Sigmoid colon (tissue), 7 donors: ENCODE measurements at regions of chr11 and their contacts with region 1.

Region 1: DNA sequence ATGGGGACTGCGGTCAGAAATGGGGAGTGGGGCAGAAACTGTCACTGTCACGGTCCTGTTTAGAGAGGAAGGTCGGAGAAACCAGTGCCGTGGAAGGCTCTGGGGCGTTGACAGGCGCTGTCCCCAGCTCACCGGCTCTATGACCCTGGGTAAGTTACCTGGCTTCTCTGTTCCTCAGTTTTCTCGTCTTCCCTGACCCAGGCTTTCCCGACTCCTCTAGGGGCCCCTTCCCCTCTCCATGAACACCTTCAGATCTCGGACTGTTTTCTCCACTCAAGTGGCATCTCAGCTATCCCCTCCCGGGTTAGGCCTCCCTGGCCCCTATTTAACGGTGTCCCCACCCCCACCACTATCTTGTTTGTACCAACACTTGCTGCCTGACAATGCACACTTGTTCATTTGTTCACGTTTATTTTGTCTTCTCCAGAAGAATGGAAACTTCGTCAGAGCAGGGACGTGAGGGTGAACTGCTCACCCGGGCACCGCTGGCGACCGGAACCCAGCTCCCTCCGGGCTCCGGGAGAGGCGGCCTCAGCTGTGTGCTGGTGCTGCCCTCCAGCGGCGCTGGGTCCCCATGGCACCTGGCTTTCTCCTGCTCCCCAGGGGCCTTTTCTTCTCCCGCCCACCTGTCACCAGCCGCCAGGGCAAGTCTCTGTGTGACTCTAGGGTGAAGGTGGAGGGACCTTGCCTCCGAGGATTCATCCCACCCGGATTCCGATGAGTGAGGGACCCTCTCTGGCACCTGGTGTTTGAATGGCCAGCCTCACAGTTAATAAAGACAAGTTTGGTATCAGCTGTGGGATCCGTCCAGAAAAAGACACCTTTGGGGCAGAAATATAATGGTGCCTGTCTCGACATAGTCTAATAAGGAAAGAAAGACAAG is 33.1 kb upstream of the SLC35C1 start:
- DNase-seq: peak; percentile 90
- H3K4me3 ChIP-seq: peak overlapping the region; percentile 29 to 59 (median 47)
- H3K27ac ChIP-seq: peak overlapping the region; percentile 61 to 73 (median 72)
- H3K4me1 ChIP-seq: peaks cover 0 to 5% (median 2%) of the 10 kb centered on the region in 4 donors
- H3K27me3 ChIP-seq: no peaks in the 10 kb centered on the region
- CTCF ChIP-seq: peak; percentile 71 to 91 (median 84)
- EP300 ChIP-seq: no peak
- POLR2A ChIP-seq: no peak

Region 2: DNA sequence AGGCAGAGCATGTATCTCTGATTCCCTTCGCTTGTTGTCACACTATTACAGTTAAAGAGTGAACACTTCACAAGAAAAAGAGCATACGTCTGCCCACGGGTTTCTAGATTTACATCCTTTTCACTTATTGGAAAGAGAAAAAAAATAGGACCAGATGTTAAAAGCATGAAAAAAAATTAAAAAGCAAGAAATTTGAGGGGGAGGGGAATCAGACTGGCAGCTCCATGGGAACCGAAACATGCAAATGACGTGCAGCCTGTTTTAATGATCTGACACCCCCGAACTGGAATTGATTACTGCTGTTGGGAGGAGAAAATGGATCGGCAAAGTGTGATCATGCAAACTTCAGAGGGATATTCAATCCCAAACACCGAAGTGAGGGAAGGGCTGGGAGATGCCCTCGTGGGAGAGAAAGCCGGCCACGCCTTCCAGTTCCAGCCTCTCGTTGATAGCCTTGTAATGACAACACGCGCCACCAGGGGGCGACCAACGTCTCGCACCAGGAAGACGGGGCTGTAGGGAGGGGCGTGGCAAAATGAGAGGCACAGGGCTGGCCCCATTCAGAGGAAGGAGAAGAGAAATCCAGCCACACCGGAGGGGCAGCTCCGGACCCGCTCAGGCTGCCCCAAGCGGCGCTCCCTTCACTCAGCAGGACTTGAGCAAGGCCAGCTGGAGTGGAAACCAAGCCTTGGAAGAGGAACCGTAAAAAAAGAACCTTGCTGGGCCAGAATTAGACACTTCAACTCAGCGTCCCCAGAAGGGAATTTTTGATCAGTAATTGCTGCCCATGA is 431.9 kb before region 1 on chr11:
- intact Hi-C with region 1: loop called (anchors 2 kb)
- DNase-seq: peak; percentile 95
- H3K4me3 ChIP-seq: peak overlapping the region in 1 of 4 donors; percentile 13
- H3K27ac ChIP-seq: no peak overlapping the region
- H3K4me1 ChIP-seq: peaks cover 0 to 10% (median 4%) of the 10 kb centered on the region in 4 donors
- H3K27me3 ChIP-seq: peaks cover 0 to 4% (median 0%) of the 10 kb centered on the region in 3 donors
- CTCF ChIP-seq: peak; percentile 65 to 87 (median 82)
- EP300 ChIP-seq: no peak
- POLR2A ChIP-seq: no peak

Region 3: GRCh38 chr11:45371251-45372115 is 400.3 kb before region 1 on chr11:
- intact Hi-C with region 1: loop called (anchors 5 kb)
- DNase-seq: no peak
- H3K4me3 ChIP-seq: no peak overlapping the region
- H3K27ac ChIP-seq: no peak overlapping the region
- H3K4me1 ChIP-seq: peaks cover 0 to 5% (median 2%) of the 10 kb centered on the region in 4 donors
- H3K27me3 ChIP-seq: peaks cover 0 to 24% (median 8%) of the 10 kb centered on the region in 3 donors
- CTCF ChIP-seq: peak in 3 of 4 experiments; percentile 57 to 78 (median 72)
- EP300 ChIP-seq: no peak
- POLR2A ChIP-seq: no peak

Region 4: DNA sequence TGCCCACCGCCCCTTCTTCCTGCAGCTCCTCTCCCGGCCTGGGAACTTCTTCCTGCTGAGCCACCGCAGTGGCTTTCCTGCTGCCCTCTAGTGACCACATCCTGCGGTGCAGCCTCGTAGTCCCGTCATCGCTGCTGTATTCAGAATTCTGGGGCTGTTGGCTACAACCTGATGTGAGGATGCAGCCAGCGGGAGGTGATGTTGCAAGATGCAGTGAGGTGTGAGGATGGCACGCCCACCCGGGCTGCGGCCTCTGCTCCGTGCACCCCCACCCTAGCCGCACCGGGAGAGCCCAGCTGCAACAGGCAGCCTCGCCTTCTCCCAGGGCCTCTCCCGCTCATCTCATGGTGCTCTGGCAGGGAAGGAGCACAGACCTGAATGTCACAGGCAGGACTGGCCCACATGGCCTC is 116.5 kb before region 1 on chr11:
- intact Hi-C with region 1: loop called (anchors 5 kb)
- DNase-seq: peak; percentile 84
- H3K4me3 ChIP-seq: no peak overlapping the region
- H3K27ac ChIP-seq: no peak overlapping the region
- H3K4me1 ChIP-seq: peaks cover 0 to 36% (median 6%) of the 10 kb centered on the region in 4 donors
- H3K27me3 ChIP-seq: peaks cover 16 to 48% (median 37%) of the 10 kb centered on the region in 3 donors
- CTCF ChIP-seq: peak; percentile 49 to 90 (median 77)
- EP300 ChIP-seq: no peak
- POLR2A ChIP-seq: no peak

Region 5: DNA sequence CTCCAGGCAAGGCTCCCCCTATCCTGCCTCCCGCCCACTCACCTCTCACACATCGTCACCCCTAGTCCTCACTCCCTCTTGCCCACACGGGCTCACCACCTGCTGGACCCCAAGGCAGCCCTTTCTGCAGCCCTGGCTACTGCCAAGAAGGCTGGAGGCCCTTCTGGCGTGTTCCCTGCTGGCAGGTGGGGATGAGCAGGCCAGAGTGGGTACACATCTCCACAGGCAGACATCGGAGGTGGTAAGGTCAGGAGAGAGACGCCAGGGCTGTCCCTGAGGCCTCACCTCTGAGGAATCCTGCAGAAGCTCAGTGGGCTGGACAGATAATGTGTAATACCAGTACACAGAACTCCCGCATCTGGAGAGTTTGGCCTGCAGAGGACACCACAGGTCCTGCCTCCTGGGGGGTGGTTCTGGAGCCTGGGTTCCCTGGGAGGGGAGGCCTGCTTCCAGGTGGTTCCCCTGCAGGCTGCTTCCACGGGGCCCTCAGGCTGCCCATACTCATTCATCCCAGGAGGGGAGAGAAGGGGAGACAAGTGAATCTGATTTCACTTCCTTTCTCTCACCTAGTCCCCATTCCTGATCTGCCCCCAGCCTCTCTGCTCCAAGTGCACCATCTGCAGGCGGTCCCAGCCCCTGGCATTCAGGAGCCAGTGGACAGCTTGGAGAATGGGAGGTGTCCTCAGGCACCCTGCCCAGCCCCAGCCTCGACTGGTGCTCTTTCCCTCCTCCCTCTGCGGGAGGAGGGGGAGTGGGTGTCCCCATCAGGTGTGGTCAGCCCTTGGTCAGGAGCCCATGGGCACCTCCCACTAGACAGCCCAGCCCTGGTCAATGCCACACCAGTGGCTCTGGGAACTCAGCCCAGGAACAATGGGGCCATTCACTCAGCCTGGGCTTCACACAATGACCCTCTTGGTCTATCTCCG is 100.3 kb before region 1 on chr11:
- intact Hi-C with region 1: loop called (anchors 5 kb)
- DNase-seq: peak; percentile 53
- H3K4me3 ChIP-seq: no peak overlapping the region
- H3K27ac ChIP-seq: no peak overlapping the region
- H3K4me1 ChIP-seq: no peaks in the 10 kb centered on the region
- H3K27me3 ChIP-seq: no peaks in the 10 kb centered on the region
- CTCF ChIP-seq: no peak
- EP300 ChIP-seq: no peak
- POLR2A ChIP-seq: no peak